GM12878 (cell line): ENCODE measurements at regions of chr7 and their contacts with region 1.

Region 1: DNA sequence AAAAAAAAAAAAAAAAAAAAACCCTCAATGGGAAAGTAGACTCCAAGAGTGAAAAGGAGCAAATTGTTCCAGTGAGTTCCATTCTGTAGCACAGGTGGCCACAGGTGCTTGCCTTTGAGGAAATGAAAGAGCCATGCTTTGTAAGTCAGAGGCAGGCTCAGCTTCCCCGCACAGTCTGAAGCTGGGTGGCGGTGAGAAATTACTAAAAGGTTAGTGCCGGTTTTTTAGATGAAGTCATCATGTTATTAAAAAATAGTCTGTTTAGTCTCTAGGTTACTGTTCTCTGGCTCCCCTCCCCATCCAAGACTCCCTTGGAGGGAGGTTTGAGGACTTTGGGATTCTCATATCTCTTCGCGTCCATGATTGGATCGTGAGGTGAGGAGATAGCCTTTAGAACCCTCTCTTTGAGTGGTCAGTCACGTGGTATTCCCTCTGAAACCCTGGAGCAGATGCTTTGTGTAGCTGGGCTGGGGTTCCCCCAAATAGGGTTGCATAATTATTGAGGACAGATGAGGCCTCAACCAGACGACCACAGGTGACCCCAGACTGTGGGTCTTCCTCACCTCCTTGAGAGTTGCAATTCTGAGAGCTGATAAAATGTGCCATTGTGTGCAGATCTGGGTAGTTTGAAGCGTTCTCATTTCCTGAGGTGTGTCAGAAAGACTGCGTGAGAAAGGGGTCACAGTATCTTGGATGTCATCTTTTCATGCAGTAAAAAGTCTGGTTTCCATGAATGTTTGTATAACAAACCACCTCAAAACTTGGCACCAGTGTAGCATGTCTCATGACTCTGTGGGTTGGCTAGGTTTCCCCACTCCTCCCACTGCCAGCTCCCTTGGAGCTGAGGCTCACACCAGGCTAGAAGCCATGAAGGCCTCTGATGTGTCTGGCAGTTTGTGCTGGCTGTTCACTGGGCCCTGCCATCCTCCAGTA is 27.1 kb downstream of the OGDH start:
- DNase-seq: peak; percentile 88
- ATAC-seq: peak; percentile 71
- H3K4me3 ChIP-seq: peak overlapping the region; percentile 39
- H3K27ac ChIP-seq: peak overlapping the region; percentile 68
- H3K4me1 ChIP-seq: peaks cover 87% of the 10 kb centered on the region
- H3K27me3 ChIP-seq: no peaks in the 10 kb centered on the region
- CTCF ChIP-seq: no peak
- EP300 ChIP-seq: peak; percentile 58 to 78; a peak in 3 of 4 replicates
- POLR2A ChIP-seq: peak; percentile 35; the same call in 1 of the 2 replicates
- RAD21 ChIP-seq: peak; percentile 26; the same call in 1 of the 2 replicates

Region 2: GRCh38 chr7:44615149-44615611 is 18.3 kb before region 1 on chr7:
- CTCF ChIA-PET with region 1: interaction called, 5 read pairs
- POLR2A ChIA-PET with region 1: interaction called, 23 read pairs
- RAD21 ChIA-PET with region 1: interaction called, 130 read pairs
- SMC1A ChIA-PET with region 1: interaction called, 106 read pairs
- in situ Hi-C with region 1: no loop called
- intact Hi-C with region 1: no loop called
- DNase-seq: no peak
- ATAC-seq: peak; percentile 58
- H3K4me3 ChIP-seq: no peak overlapping the region
- H3K27ac ChIP-seq: peak overlapping the region; percentile 46
- H3K4me1 ChIP-seq: peaks cover 40% of the 10 kb centered on the region
- H3K27me3 ChIP-seq: no peaks in the 10 kb centered on the region
- CTCF ChIP-seq: no peak
- EP300 ChIP-seq: no peak
- POLR2A ChIP-seq: no peak
- RAD21 ChIP-seq: no peak

Region 3: DNA sequence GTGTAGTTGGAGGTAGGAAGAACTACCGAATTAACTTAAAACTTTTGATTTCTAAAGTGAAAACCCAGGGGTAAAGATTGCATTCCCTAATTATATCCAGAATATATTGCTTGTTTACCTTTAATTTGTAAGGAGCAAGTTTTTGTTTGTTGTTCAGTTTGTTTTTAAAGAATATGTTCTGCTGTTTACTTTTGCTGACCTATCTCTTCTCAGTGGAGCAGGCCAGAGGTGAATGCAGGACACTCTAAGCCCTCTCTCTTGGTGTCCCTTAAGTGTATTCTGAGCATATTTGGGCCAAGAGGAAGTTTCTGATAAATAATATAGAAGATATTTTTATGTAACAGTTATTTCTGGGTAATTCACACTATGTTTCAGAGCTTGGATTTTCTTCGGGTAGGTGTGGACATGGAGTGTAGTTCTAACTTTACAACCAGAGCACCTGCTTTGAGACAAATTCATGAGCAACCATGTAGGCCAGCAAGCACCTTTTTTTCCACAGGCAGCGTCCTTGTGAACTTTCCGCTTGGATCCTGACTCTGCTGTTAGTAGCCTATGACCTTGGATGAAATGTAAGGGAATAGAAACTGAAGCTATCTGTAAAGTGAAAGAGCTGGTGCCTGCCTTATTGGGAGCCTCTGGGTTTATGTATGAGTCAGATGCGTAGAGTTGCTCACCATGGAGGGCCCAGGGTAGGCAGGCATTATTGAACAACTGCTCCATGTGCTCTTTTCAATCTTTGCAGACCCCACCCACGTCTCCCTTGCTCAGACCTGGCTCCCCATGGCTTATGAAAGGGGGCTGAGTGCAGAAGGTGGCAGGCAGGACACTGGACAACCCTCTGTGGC is 11.0 kb before region 1 on chr7:
- CTCF ChIA-PET with region 1: interaction called, 18 read pairs
- POLR2A ChIA-PET with region 1: interaction called, 27 read pairs
- RAD21 ChIA-PET with region 1: interaction called, 130 read pairs
- SMC1A ChIA-PET with region 1: interaction called, 106 read pairs
- in situ Hi-C with region 1: no loop called
- intact Hi-C with region 1: no loop called
- DNase-seq: no peak
- ATAC-seq: peak; percentile 91
- H3K4me3 ChIP-seq: peak overlapping the region; percentile 44
- H3K27ac ChIP-seq: peak overlapping the region; percentile 90
- H3K4me1 ChIP-seq: peaks cover 49% of the 10 kb centered on the region
- H3K27me3 ChIP-seq: no peaks in the 10 kb centered on the region
- CTCF ChIP-seq: no peak
- EP300 ChIP-seq: no peak
- POLR2A ChIP-seq: 0 out of 2 replicates have a peak, but pooled peaks have one; percentile 22
- RAD21 ChIP-seq: no peak